Vagina (tissue), 2 donors: ENCODE measurements at regions of chr5 and their contacts with region 1.

Region 1: DNA sequence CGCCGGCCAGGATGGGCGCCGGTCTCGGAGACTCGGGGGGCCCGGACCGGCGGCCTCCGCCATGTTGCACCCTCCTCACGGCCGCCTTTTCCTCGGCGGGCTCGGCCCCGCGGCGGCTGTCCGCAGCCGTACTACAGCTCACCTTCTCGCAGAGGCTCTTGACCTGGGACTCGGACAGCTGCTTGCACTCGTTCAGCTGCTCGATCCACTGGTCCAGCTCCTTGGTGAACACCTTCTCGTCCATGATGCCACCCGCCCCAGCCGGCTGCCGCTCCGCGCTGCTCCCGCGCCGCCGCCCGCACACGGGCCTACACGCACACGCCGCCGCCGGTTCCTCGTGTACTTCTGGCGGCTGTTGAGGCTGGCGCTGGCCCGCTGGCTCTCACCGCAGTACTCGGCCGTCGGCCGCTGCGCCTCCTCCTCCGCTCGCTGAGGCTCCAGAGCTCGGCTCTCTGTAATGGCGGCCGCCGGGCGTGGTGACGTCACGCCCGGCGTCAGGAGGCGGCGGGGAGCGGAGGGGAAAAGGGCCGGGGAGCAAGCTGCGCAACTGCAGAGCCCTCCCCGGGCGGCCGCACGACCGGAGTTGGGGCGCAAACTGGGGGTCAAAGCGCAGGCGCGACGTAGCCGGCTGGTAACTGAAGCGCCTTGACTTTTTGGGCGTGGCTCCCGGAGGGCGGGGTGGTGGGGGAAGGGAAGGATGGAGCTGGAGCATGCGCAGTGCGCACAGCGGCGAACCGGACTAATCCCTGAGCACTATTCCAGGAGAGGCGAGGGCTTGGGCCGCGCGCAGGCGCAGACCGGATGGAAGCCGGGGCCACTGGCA is at the start of gene PPP2CA:
- DNase-seq: peak in 1 of 2 donors; percentile 99
- H3K4me3 ChIP-seq: peak within 1 kb of the TSS; percentile 84 to 97
- H3K27ac ChIP-seq: peak within 1 kb of the TSS; percentile 100
- H3K4me1 ChIP-seq: peaks cover 49% of the 10 kb centered on the region
- H3K27me3 ChIP-seq: no peaks in the 10 kb centered on the region
- CTCF ChIP-seq: peak in 1 of 3 experiments; percentile 22
- POLR2A ChIP-seq: peak; percentile 29 to 95
- total RNA-seq, gene PPP2CA: 56.2 TPM

Region 2: DNA sequence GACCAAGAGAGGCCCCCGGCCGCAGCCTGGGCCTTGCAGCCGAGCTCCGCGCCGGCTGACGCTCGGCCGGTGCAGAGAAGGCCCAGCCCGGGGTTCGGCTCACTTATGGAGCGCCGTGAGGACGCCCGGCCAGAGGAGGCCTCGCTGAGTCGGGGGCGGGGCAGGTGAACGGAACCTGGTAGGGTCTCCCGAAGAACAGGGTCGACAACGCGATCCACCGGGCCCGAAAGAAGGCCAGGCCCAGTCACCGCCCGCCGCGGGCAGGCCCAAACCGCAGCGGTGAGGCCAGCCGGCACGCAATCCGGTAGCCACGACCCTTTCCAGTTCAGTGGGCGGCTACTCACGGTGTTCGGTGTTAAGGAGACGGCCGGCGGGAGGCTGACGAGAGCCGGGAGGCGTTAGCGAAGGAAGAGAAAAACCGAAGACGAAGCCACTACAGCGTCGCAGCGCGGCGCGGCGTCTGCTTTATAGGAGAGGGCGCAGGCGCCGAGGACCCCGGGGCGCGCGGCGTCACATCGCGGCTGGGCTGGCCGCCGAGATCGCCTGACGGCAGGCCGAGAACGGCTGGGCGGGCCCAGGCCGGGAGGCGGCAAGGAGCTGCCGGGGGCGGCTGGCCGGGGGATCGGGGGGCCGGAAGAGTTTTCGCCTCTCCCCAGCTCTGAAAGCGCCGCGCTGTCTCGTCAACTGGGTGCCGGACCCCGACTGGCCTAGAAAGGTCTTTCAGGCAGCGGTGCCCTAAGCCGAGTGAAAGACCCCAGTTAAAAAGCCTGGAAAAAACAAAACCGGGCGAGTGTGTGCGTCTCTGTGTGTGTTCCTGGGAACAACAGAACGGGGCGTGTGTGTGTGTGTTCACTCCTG is 49.1 kb before region 1 on chr5 and contains the start of gene SKP1:
- intact Hi-C with region 1: loop called (anchors 1 kb)
- DNase-seq: no peak
- H3K4me3 ChIP-seq: peak within 1 kb of the TSS; percentile 98 to 99
- H3K27ac ChIP-seq: peak within 1 kb of the TSS; percentile 99
- H3K4me1 ChIP-seq: peaks cover 52% of the 10 kb centered on the region
- H3K27me3 ChIP-seq: no peaks in the 10 kb centered on the region
- CTCF ChIP-seq: no peak
- POLR2A ChIP-seq: peak in 1 of 2 donors; percentile 95
- total RNA-seq, gene SKP1: 147 TPM

Region 3: DNA sequence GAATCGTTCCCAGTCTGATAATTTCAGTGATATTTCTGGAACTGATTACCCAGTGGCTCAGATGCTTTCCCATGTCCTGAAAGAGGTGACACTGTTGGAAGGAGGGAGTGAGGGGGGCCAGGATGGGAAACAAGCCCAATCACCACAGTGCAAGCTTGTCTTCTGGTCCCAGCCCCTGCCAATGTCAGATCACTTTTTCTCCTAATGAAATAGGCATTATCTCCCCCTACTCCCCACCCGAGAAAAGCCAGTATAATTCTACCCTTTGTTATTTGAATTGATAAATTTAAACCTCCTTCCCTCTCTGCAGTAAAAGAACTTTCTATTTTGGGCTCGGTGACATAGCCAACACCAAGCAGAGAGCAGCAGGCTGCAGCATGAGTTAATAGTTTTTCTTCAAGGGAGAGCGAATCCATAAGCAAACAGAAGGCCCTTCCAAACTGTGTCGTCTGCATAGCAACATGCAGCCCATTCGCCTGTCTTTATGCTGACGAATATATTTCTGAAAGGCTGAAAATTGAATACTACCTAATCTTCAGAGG is 14.7 kb after region 1 on chr5:
- intact Hi-C with region 1: no loop called
- DNase-seq: no peak
- H3K4me3 ChIP-seq: no peak overlapping the region
- H3K27ac ChIP-seq: peak overlapping the region; percentile 21
- H3K4me1 ChIP-seq: peaks cover 5% of the 10 kb centered on the region
- H3K27me3 ChIP-seq: no peaks in the 10 kb centered on the region
- CTCF ChIP-seq: no peak
- POLR2A ChIP-seq: no peak

Region 4: DNA sequence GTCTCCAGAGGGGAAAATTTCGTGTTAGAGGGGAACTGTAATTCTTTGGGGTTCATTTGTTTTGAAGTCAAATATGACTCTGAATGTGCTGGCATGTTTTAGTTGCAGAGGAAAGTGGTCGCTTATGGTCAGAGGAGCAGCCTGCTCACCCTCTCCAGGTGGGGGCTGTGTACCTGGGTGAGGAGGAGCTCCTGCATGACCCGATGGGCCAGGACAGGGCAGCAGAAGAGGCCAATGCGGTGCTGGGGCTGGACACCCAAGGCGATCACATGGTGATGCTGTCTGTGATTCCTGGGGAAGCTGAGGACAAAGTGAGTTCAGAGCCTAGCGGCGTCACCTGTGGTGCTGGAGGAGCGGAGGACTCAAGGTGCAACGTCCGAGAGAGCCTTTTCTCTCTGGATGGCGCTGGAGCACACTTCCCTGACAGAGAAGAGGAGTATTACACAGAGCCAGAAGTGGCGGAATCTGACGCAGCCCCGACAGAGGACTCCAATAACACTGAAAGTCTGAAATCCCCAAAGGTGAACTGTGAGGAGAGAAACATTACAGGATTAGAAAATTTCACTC is 661.8 kb after region 1 on chr5:
- intact Hi-C with region 1: no loop called
- DNase-seq: no peak
- H3K4me3 ChIP-seq: no peak overlapping the region
- H3K27ac ChIP-seq: no peak overlapping the region
- H3K4me1 ChIP-seq: peaks cover 9% of the 10 kb centered on the region
- H3K27me3 ChIP-seq: no peaks in the 10 kb centered on the region
- CTCF ChIP-seq: no peak
- POLR2A ChIP-seq: no peak